ENCODE measurements at regions of chr14 and their contacts with region 1.

Region 1: GRCh38 chr14:95527387-95528002 is 7.4 kb upstream of the GLRX5 start:
- DNase-seq: peak; percentile 82
- H3K4me3 ChIP-seq: no peak overlapping the region
- H3K27ac ChIP-seq: peak overlapping the region; percentile 48 to 69 (median 57)
- H3K4me1 ChIP-seq: peaks cover 0 to 43% (median 24%) of the 10 kb centered on the region in 4 donors
- H3K27me3 ChIP-seq: no peaks in the 10 kb centered on the region
- CTCF ChIP-seq: peak; percentile 39 to 68 (median 62)
- EP300 ChIP-seq: no peak
- POLR2A ChIP-seq: no peak

Region 2: GRCh38 chr14:95319312-95320021 is 208.0 kb before region 1 on chr14 and contains the start of gene CLMN:
- intact Hi-C with region 1: loop called (anchors 10 kb)
- DNase-seq: no peak
- H3K4me3 ChIP-seq: peak within 1 kb of the TSS; percentile 52 to 83 (median 78)
- H3K27ac ChIP-seq: peak within 1 kb of the TSS; percentile 54 to 77 (median 72)
- H3K4me1 ChIP-seq: peaks cover 0 to 27% (median 14%) of the 10 kb centered on the region in 4 donors
- H3K27me3 ChIP-seq: no peaks in the 10 kb centered on the region
- CTCF ChIP-seq: no peak
- EP300 ChIP-seq: no peak
- POLR2A ChIP-seq: no peak
- total RNA-seq, gene CLMN: 3.5 to 9.1 (median 5.1) TPM

Region 3: GRCh38 chr14:95442633-95443021 is 84.9 kb before region 1 on chr14:
- intact Hi-C with region 1: loop called (anchors 1 kb)
- DNase-seq: peak; percentile 87
- H3K4me3 ChIP-seq: no peak overlapping the region
- H3K27ac ChIP-seq: no peak overlapping the region
- H3K4me1 ChIP-seq: no peaks in the 10 kb centered on the region
- H3K27me3 ChIP-seq: no peaks in the 10 kb centered on the region
- CTCF ChIP-seq: peak; percentile 58 to 84 (median 75)
- EP300 ChIP-seq: no peak
- POLR2A ChIP-seq: no peak

Region 4: GRCh38 chr14:95472819-95473251 is 54.7 kb before region 1 on chr14:
- intact Hi-C with region 1: no loop called
- DNase-seq: no peak
- H3K4me3 ChIP-seq: no peak overlapping the region
- H3K27ac ChIP-seq: no peak overlapping the region
- H3K4me1 ChIP-seq: peaks cover 0 to 36% (median 29%) of the 10 kb centered on the region in 4 donors
- H3K27me3 ChIP-seq: no peaks in the 10 kb centered on the region
- CTCF ChIP-seq: no peak
- EP300 ChIP-seq: no peak
- POLR2A ChIP-seq: no peak

Region 5: GRCh38 chr14:96136352-96137005 is 609.0 kb after region 1 on chr14:
- intact Hi-C with region 1: no loop called
- DNase-seq: no peak
- H3K4me3 ChIP-seq: no peak overlapping the region
- H3K27ac ChIP-seq: peak overlapping the region in 2 of 4 donors; percentile 29 to 45
- H3K4me1 ChIP-seq: no peaks in the 10 kb centered on the region
- H3K27me3 ChIP-seq: no peaks in the 10 kb centered on the region
- CTCF ChIP-seq: no peak
- EP300 ChIP-seq: no peak
- POLR2A ChIP-seq: no peak

Measured in sigmoid colon (tissue), 7 donors.